ENCODE measurements at regions of chr12 and their contacts with region 1.

Region 1: DNA sequence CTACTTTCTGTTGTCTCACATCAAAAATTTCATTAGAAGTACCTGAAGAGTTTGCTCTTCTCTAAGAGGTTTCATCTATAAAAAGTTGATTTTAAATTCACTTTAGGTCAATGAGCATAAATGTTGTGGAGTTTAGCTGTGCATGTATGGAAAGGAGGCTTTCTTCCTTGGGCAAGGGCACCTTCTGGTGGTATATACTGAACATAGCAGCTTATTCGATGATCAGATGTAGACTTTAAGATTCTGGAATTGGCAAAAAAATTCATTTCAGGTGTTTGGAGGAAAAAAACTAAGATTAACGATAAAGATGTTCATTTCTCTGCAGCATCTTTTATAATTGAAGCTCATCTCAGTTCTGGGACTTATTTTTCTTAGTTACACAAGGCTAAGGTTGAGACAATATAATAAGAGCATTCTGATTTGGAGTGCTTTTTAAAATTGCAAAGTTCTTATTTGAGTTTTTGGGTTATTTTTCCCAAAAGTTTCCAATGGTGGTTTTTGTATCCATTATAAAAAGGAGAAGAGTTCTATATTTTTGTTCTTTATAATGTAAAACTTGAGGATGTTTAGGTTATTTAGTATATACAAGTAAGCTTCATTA is 46.8 kb downstream of the TMEM117 start:
- DNase-seq: peak in 4 of 5 donors; percentile 53 to 60 (median 56)
- H3K4me3 ChIP-seq: no peak overlapping the region
- H3K4me3 Mint-ChIP-seq: no peak overlapping the region
- H3K27ac ChIP-seq: no peak overlapping the region
- H3K27ac Mint-ChIP-seq: no peak overlapping the region
- H3K4me1 ChIP-seq: no peaks in the 10 kb centered on the region
- H3K4me1 Mint-ChIP-seq: peaks cover 0 to 4% (median 0%) of the 10 kb centered on the region in 4 donors
- H3K27me3 ChIP-seq: no peaks in the 10 kb centered on the region
- H3K27me3 Mint-ChIP-seq: no peaks in the 10 kb centered on the region

Region 2: DNA sequence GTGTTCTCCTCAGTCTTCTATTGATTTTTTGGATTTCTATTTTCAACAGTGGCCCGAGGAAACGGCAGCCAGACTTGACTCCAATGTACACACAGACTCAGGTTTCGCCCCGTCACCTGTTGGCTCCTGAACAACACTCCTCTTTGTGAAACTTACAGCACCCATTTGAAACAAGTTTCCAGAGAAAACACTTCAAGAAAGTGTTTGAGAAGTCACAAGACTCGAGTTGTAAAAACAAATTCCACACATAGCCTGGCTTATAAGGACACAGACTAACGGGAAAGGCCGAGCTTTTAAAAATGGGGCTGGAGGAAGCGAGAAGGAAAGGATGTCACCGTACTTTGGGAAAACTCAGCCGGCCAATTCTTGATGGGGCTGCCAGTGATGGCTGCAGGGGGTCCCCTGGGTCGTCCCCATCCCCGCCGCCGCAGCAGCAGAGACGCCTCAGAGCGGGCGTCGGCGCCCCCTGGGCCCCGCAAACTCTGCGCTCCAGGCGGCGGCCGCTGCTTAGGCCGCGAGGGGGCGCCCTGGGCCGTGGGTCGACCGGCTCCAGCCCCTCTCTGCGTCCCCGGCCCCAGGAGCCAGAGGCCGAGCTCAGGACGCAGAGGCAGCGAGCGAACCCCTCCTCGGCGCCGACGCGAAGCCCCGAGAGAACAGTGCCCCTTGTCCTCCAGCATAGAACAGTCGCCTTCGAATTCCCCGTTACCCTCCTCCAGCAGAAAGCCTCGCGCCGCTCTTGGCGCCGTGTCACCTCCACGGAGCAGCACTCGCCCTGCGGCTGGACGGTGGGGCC is 1400.0 kb before region 1 on chr12:
- CTCF ChIA-PET with region 1: no interaction called
- POLR2A ChIA-PET with region 1: no interaction called
- intact Hi-C with region 1: loop called (anchors 5 kb)
- DNase-seq: peak; percentile 15 to 38 (median 28)
- H3K4me3 ChIP-seq: peak overlapping the region in 1 of 2 donors; percentile 51
- H3K4me3 Mint-ChIP-seq: peak overlapping the region; percentile 75 to 82 (median 79)
- H3K27ac ChIP-seq: no peak overlapping the region
- H3K27ac Mint-ChIP-seq: no peak overlapping the region
- H3K4me1 ChIP-seq: peaks cover 14% of the 10 kb centered on the region
- H3K4me1 Mint-ChIP-seq: peaks cover 6 to 17% (median 13%) of the 10 kb centered on the region in 4 donors
- H3K27me3 ChIP-seq: peaks cover 25% of the 10 kb centered on the region
- H3K27me3 Mint-ChIP-seq: peaks cover 48 to 60% of the 10 kb centered on the region in 2 donors

Region 3: GRCh38 chr12:43501703-43502102 is 381.0 kb before region 1 on chr12:
- CTCF ChIA-PET with region 1: no interaction called
- POLR2A ChIA-PET with region 1: no interaction called
- intact Hi-C with region 1: loop called (anchors 5 kb)
- DNase-seq: no peak
- H3K4me3 ChIP-seq: no peak overlapping the region
- H3K4me3 Mint-ChIP-seq: no peak overlapping the region
- H3K27ac ChIP-seq: no peak overlapping the region
- H3K27ac Mint-ChIP-seq: no peak overlapping the region
- H3K4me1 ChIP-seq: no peaks in the 10 kb centered on the region
- H3K4me1 Mint-ChIP-seq: no peaks in the 10 kb centered on the region
- H3K27me3 ChIP-seq: no peaks in the 10 kb centered on the region
- H3K27me3 Mint-ChIP-seq: peaks cover 0 to 2% of the 10 kb centered on the region in 2 donors

Region 4: DNA sequence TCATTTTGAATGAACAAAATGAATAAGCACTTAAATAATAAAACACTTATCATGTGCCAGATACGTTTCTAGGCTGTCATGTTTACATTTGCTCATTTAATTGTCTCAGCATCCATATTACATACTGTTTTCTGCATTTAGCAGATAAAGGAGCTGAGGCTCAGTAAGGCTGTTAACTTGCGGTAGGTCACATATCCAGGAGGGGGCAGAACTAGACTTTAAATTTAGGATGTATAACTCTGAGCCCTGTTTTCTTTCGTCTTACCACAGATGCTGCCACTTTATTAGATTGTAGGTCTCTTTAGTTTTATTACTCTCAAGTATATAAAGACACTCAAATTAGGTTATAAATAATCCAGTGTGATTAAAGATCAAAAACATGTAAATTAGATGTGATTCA is 106.2 kb before region 1 on chr12:
- CTCF ChIA-PET with region 1: interaction called, 59 read pairs
- POLR2A ChIA-PET with region 1: interaction called, 4 read pairs
- intact Hi-C with region 1: loop called (anchors 1 kb)
- DNase-seq: peak in 4 of 5 donors; percentile 19 to 38 (median 32)
- H3K4me3 ChIP-seq: no peak overlapping the region
- H3K4me3 Mint-ChIP-seq: no peak overlapping the region
- H3K27ac ChIP-seq: no peak overlapping the region
- H3K27ac Mint-ChIP-seq: no peak overlapping the region
- H3K4me1 ChIP-seq: no peaks in the 10 kb centered on the region
- H3K4me1 Mint-ChIP-seq: peaks cover 1 to 6% (median 4%) of the 10 kb centered on the region in 4 donors
- H3K27me3 ChIP-seq: no peaks in the 10 kb centered on the region
- H3K27me3 Mint-ChIP-seq: no peaks in the 10 kb centered on the region

Region 5: DNA sequence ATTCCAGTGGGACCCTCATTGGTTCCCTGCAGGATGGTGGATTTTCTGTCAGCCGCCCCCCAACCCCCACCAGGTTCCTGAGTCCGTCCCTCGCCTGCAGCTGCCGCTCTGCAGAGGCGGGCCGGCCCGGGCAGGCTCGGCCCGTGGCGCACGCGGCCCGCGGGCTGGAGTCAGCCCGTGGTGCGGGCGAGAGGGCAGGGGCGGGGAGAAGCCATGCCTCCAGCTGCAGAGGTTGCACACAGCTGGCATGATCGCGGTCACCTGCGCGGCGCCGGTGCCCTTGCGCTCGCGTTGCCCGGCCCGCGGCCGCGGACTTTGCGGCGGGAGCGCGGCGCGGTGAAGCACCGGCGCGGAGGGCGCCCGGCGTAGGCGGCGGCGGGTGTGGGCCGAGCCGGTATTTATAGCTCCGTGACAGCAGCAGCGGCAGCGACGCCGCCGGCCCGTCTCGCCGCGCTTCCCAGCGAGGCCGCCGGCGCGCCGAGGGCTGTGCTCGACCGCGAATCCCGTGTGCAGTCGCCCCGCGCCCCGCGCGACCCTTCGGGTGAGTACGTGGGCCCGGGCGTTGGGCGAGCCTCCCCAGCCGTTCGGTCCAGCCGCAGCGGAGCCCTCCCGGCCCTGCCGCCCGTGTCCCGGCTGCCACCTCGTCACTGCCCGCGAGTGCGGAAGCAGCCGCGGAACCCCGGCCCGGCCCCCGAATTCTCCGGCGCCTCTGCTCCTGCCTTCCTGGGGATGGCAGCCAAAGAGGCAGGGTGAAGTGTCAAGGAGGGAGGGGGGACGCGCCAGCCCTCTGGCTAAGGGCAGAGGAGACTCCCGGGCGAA is 46.8 kb before region 1 on chr12 and contains the start of gene TMEM117:
- CTCF ChIA-PET with region 1: interaction called, 4 read pairs
- POLR2A ChIA-PET with region 1: no interaction called
- intact Hi-C with region 1: loop called (anchors 5 kb)
- DNase-seq: peak; percentile 66 to 74 (median 70)
- H3K4me3 ChIP-seq: peak within 1 kb of the TSS; percentile 26 to 67
- H3K4me3 Mint-ChIP-seq: peak within 1 kb of the TSS; percentile 85 to 98 (median 90)
- H3K27ac ChIP-seq: peak within 1 kb of the TSS; percentile 61
- H3K27ac Mint-ChIP-seq: peak within 1 kb of the TSS; percentile 85 to 98 (median 91)
- H3K4me1 ChIP-seq: peaks cover 46% of the 10 kb centered on the region
- H3K4me1 Mint-ChIP-seq: peaks cover 29 to 55% (median 46%) of the 10 kb centered on the region in 4 donors
- H3K27me3 ChIP-seq: no peaks in the 10 kb centered on the region
- H3K27me3 Mint-ChIP-seq: no peaks in the 10 kb centered on the region
- total RNA-seq, gene TMEM117: 3.7 to 4.7 TPM

Measured in CD4-positive, alpha-beta memory T cell (primary cell).